ENCODE measurements at regions of chr13 and their contacts with region 1.

Region 1: GRCh38 chr13:113216254-113217048 is 7.0 kb downstream of the CUL4A start:
- DNase-seq: peak; percentile 30 to 75 (median 55)
- ATAC-seq: peak; percentile 84 to 91 (median 86)
- H3K4me3 ChIP-seq: no peak overlapping the region
- H3K27ac ChIP-seq: peak overlapping the region; percentile 41 to 89 (median 73)
- H3K4me1 ChIP-seq: peaks cover 0 to 92% (median 63%) of the 10 kb centered on the region in 12 donors
- H3K27me3 ChIP-seq: no peaks in the 10 kb centered on the region
- CTCF ChIP-seq: no peak
- POLR2A ChIP-seq: no peak

Region 2: GRCh38 chr13:113029487-113030258 is 186.8 kb before region 1 on chr13:
- intact Hi-C with region 1: loop called in 6 of 10 experiments (anchors 2 to 10 kb)
- DNase-seq: no peak
- ATAC-seq: peak in 2 of 4 donors; percentile 27 to 60
- H3K4me3 ChIP-seq: no peak overlapping the region
- H3K27ac ChIP-seq: no peak overlapping the region
- H3K4me1 ChIP-seq: peaks cover 0 to 10% (median under 1%) of the 10 kb centered on the region in 12 donors
- H3K27me3 ChIP-seq: peaks cover 0 to 5% (median 0%) of the 10 kb centered on the region in 9 donors
- CTCF ChIP-seq: peak; percentile 61 to 87 (median 76)
- POLR2A ChIP-seq: no peak

Region 3: GRCh38 chr13:113238536-113238935 is 22.1 kb after region 1 on chr13:
- intact Hi-C with region 1: no loop called
- DNase-seq: no peak
- ATAC-seq: no peak
- H3K4me3 ChIP-seq: no peak overlapping the region
- H3K27ac ChIP-seq: no peak overlapping the region
- H3K4me1 ChIP-seq: no peaks in the 10 kb centered on the region
- H3K27me3 ChIP-seq: no peaks in the 10 kb centered on the region
- CTCF ChIP-seq: no peak
- POLR2A ChIP-seq: no peak

Region 4: DNA sequence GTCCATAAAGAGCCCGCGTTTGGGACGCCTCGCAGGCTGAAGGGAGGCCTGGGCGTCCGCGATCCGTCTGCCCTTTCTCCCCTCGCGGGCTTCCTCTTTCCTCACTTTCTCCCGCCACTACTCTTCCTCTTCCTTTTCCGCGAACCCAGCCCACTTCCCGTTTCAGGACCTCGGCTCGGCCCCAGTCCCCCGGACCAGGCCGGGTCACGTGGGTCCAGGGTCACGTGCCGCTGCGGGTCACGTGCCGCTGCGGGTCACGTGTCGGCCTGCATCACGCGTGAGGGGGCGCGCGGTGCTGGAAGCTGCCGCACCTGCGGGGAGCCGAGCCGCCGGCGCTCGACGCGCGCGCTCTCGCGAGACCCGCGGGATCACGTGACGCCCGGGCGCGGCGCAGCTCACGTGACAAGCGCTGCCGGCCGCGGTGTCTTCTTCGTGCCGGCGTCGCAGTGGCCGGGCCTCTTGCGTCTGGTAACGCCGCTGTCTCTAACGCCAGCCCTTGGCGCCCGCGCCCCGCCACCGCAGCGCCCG is 80.5 kb after region 1 on chr13 and contains the start of gene LAMP1:
- intact Hi-C with region 1: loop called in 1 of 10 experiments (anchors 5 kb)
- DNase-seq: peak; percentile 97 to 100 (median 99)
- ATAC-seq: peak; percentile 91 to 95 (median 94)
- H3K4me3 ChIP-seq: peak within 1 kb of the TSS; percentile 77 to 98 (median 88)
- H3K27ac ChIP-seq: peak within 1 kb of the TSS; percentile 53 to 95 (median 92)
- H3K4me1 ChIP-seq: peaks cover 0 to 53% (median 23%) of the 10 kb centered on the region in 12 donors
- H3K27me3 ChIP-seq: peaks cover 0 to 3% (median 0%) of the 10 kb centered on the region in 9 donors
- CTCF ChIP-seq: peak in 1 of 12 donors; percentile 12
- POLR2A ChIP-seq: peak in 1 of 2 donors; percentile 74
- total RNA-seq, gene LAMP1: 77.5 to 214 (median 101) TPM

Measured in heart left ventricle (tissue), 16 donors.